A673 (cell line): ENCODE measurements at regions of chr1 and their contacts with region 1.

Region 1: DNA sequence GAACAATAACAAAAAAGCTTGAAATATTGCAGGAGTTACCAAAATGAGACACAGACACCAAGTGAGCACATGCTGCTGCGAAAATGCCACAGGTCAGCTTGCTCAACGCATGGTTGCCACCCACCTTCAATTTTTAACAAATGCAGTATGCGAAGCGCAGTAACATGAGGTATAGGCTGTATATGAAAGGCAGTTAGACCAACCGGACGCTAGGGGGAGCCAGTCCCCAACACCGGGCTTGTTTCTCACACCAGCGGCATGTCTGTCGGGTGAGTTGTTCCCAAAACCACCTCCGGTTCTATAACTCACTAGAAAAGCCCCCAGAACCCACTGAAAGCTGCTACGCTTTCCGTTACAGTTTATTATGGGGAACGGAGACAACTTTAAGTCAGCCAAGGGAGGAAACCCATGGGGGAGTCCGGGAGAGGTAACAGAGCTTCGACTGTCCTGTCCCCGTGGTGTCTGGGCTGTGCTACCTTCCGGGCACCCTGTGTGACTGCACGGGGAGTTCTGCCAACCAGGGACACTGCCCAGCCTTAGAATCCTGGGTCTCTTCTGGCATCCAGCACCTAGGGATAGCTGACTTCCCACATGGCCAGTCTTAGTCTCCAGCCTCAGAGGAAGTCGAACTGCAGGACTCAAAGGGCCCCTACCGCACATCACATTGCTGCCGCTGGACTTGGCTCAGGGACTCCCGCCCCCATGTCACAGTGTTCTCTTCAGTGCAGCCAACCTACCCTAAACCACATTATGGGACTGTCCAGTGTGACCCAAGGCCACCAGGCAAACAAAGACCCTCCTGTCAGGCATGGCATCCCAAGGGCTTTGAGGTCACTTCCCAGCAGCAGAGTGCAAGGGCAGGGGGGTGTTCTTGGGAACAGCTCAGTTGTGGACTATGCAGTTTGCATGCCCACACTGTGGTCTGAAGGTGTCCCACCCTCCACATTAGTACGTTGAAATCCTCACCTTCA is 14.0 kb downstream of the RNF187 start:
- DNase-seq: peak; percentile 89
- H3K4me3 ChIP-seq: no peak overlapping the region
- H3K27ac ChIP-seq: no peak overlapping the region
- H3K4me1 ChIP-seq: peaks cover 3% of the 10 kb centered on the region
- H3K27me3 ChIP-seq: no peaks in the 10 kb centered on the region
- CTCF ChIP-seq: peak; percentile 96

Region 2: GRCh38 chr1:228378090-228378872 is 122.9 kb before region 1 on chr1:
- CTCF ChIA-PET with region 1: no interaction called
- POLR2A ChIA-PET with region 1: no interaction called
- intact Hi-C with region 1: loop called (anchors 5 kb)
- DNase-seq: peak; percentile 74
- H3K4me3 ChIP-seq: peak overlapping the region; percentile 75
- H3K27ac ChIP-seq: peak overlapping the region; percentile 71
- H3K4me1 ChIP-seq: peaks cover 5% of the 10 kb centered on the region
- H3K27me3 ChIP-seq: no peaks in the 10 kb centered on the region
- CTCF ChIP-seq: peak; percentile 80

Region 3: GRCh38 chr1:228513236-228513900 is 12.2 kb after region 1 on chr1:
- CTCF ChIA-PET with region 1: no interaction called
- POLR2A ChIA-PET with region 1: no interaction called
- intact Hi-C with region 1: no loop called
- DNase-seq: no peak
- H3K4me3 ChIP-seq: no peak overlapping the region
- H3K27ac ChIP-seq: no peak overlapping the region
- H3K4me1 ChIP-seq: no peaks in the 10 kb centered on the region
- H3K27me3 ChIP-seq: peaks cover 36% of the 10 kb centered on the region
- CTCF ChIP-seq: no peak